ENCODE measurements at regions of chr5 and their contacts with region 1.

Region 1: GRCh38 chr5:159106569-159107282 is 7.0 kb upstream of the EBF1 start:
- DNase-seq: peak; percentile 88
- ATAC-seq: peak; percentile 75
- H3K4me3 ChIP-seq: peak overlapping the region; percentile 44 to 70 (median 66)
- H3K4me3 Mint-ChIP-seq: peak overlapping the region; percentile 100
- H3K27ac ChIP-seq: no peak overlapping the region
- H3K27ac Mint-ChIP-seq: peak overlapping the region; percentile 87
- H3K4me1 ChIP-seq: peaks cover 42 to 48% of the 10 kb centered on the region in 2 donors
- H3K4me1 Mint-ChIP-seq: peaks cover 52% of the 10 kb centered on the region
- H3K27me3 ChIP-seq: no peaks in the 10 kb centered on the region
- H3K27me3 Mint-ChIP-seq: no peaks in the 10 kb centered on the region
- CTCF ChIP-seq: peak; percentile 98

Region 2: GRCh38 chr5:157820593-157821252 is 1286.0 kb before region 1 on chr5:
- CTCF ChIA-PET with region 1: interaction called, 24 read pairs
- POLR2A ChIA-PET with region 1: no interaction called
- intact Hi-C with region 1: loop called (anchors 1 kb)
- DNase-seq: peak; percentile 53
- ATAC-seq: no peak
- H3K4me3 ChIP-seq: no peak overlapping the region
- H3K4me3 Mint-ChIP-seq: no peak overlapping the region
- H3K27ac ChIP-seq: peak overlapping the region in 1 of 2 donors; percentile 39
- H3K27ac Mint-ChIP-seq: peak overlapping the region; percentile 2
- H3K4me1 ChIP-seq: no peaks in the 10 kb centered on the region
- H3K4me1 Mint-ChIP-seq: peaks cover 24% of the 10 kb centered on the region
- H3K27me3 ChIP-seq: no peaks in the 10 kb centered on the region
- H3K27me3 Mint-ChIP-seq: no peaks in the 10 kb centered on the region
- CTCF ChIP-seq: peak; percentile 72

Region 3: DNA sequence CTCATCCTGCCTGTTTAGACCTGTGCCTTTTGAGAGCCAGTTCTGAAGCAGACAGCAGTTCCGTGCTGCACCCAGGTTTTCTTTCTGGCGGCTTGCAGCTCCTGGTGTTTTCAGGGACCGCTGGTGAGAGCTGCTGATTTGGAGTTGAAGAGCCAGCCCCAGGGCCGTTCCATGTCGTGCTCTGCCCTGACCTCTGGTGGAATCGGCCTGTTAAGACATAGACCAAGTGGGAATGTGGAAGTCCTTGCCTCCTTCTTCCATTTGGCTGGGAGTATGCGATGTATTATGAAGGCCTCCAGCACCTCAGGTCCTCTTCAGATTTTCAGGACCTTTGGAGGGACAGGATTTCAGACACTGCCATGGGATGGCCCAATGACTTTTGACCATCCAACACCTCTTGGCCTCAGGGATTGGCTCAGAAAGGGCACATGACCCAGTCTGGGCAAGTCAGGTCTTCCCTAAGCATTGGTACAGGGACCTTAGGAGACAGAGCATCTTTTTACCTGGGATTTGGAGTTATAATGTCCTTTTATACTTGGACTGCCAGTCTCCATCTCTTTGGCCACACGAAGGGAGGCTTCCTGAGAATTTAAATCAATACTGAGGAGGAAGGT is 1111.7 kb before region 1 on chr5:
- CTCF ChIA-PET with region 1: interaction called, 8 read pairs
- POLR2A ChIA-PET with region 1: no interaction called
- intact Hi-C with region 1: loop called (anchors 5 kb)
- DNase-seq: peak; percentile 57
- ATAC-seq: peak; percentile 69
- H3K4me3 ChIP-seq: no peak overlapping the region
- H3K4me3 Mint-ChIP-seq: no peak overlapping the region
- H3K27ac ChIP-seq: no peak overlapping the region
- H3K27ac Mint-ChIP-seq: no peak overlapping the region
- H3K4me1 ChIP-seq: peaks cover 0 to 3% of the 10 kb centered on the region in 2 donors
- H3K4me1 Mint-ChIP-seq: peaks cover 2% of the 10 kb centered on the region
- H3K27me3 ChIP-seq: peaks cover 0 to 4% (median 0%) of the 10 kb centered on the region in 4 experiments
- H3K27me3 Mint-ChIP-seq: peaks cover 5% of the 10 kb centered on the region
- CTCF ChIP-seq: peak; percentile 72

Region 4: DNA sequence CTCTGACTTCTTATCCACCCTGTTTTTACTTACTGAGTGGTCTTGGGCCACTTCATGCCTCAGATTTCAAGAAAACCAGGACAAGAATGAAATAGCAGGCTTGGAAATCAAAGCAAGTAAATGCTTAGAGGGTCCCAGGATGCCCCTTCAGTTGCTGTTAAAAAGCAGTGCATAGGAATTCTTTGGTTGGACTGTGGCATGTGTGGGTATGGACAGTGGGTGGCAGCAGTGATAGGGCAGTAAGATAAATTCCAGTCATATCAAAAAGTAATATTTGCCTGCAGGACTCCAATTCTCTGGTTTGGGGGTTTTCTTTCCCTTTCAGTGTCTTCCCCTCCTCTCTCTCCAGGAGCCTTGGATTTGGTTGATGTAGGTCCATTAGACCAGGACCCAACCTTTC is 941.1 kb before region 1 on chr5:
- CTCF ChIA-PET with region 1: interaction called, 238 read pairs
- POLR2A ChIA-PET with region 1: no interaction called
- intact Hi-C with region 1: no loop called
- DNase-seq: no peak
- ATAC-seq: no peak
- H3K4me3 ChIP-seq: no peak overlapping the region
- H3K4me3 Mint-ChIP-seq: no peak overlapping the region
- H3K27ac ChIP-seq: no peak overlapping the region
- H3K27ac Mint-ChIP-seq: no peak overlapping the region
- H3K4me1 ChIP-seq: peaks cover 9 to 10% of the 10 kb centered on the region in 2 donors
- H3K4me1 Mint-ChIP-seq: peaks cover 9% of the 10 kb centered on the region
- H3K27me3 ChIP-seq: peaks cover 0 to 3% (median 0%) of the 10 kb centered on the region in 4 experiments
- H3K27me3 Mint-ChIP-seq: peaks cover 14% of the 10 kb centered on the region
- CTCF ChIP-seq: no peak

Region 5: GRCh38 chr5:158751961-158752655 is 354.6 kb before region 1 on chr5:
- CTCF ChIA-PET with region 1: interaction called, 4 read pairs
- POLR2A ChIA-PET with region 1: no interaction called
- intact Hi-C with region 1: loop called (anchors 2 kb)
- DNase-seq: peak; percentile 79
- ATAC-seq: peak; percentile 80
- H3K4me3 ChIP-seq: peak overlapping the region; percentile 23 to 62 (median 34)
- H3K4me3 Mint-ChIP-seq: peak overlapping the region; percentile 87
- H3K27ac ChIP-seq: peak overlapping the region; percentile 78 to 81
- H3K27ac Mint-ChIP-seq: peak overlapping the region; percentile 67
- H3K4me1 ChIP-seq: peaks cover 60 to 70% of the 10 kb centered on the region in 2 donors
- H3K4me1 Mint-ChIP-seq: peaks cover 91% of the 10 kb centered on the region
- H3K27me3 ChIP-seq: no peaks in the 10 kb centered on the region
- H3K27me3 Mint-ChIP-seq: no peaks in the 10 kb centered on the region
- CTCF ChIP-seq: no peak

Region 6: GRCh38 chr5:158880483-158881001 is 226.2 kb before region 1 on chr5:
- CTCF ChIA-PET with region 1: interaction called, 15 read pairs
- POLR2A ChIA-PET with region 1: no interaction called
- intact Hi-C with region 1: loop called (anchors 2 kb)
- DNase-seq: peak; percentile 54
- ATAC-seq: peak; percentile 25
- H3K4me3 ChIP-seq: peak overlapping the region in 2 of 5 experiments; percentile 13 to 29
- H3K4me3 Mint-ChIP-seq: peak overlapping the region; percentile 73
- H3K27ac ChIP-seq: peak overlapping the region; percentile 71 to 85
- H3K27ac Mint-ChIP-seq: peak overlapping the region; percentile 89
- H3K4me1 ChIP-seq: peaks cover 89 to 97% of the 10 kb centered on the region in 2 donors
- H3K4me1 Mint-ChIP-seq: peaks cover 92% of the 10 kb centered on the region
- H3K27me3 ChIP-seq: no peaks in the 10 kb centered on the region
- H3K27me3 Mint-ChIP-seq: no peaks in the 10 kb centered on the region
- CTCF ChIP-seq: no peak

Region 7: DNA sequence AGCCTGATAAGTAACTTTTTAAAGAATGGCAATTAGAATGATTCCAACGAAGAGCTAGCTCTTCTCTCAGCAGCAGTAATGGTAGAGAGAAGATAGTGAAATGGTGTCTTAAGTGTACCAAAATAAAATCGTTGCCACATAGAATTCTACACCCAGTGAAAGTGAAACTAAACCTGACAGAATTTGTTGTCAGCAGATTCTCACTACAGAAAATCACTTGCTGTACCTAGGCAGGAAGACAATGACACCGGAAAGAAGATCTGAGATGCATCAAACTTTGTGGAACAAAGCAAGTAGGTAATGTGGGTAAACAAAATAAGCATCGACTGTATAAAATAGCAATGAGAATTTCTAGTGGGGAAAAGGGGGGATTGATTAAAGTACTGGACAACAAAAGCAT is 13.7 kb after region 1 on chr5:
- CTCF ChIA-PET with region 1: interaction called, 11 read pairs
- POLR2A ChIA-PET with region 1: no interaction called
- intact Hi-C with region 1: no loop called
- DNase-seq: peak; percentile 19
- ATAC-seq: peak; percentile 39
- H3K4me3 ChIP-seq: peak overlapping the region in 1 of 5 experiments; percentile 3
- H3K4me3 Mint-ChIP-seq: peak overlapping the region; percentile 57
- H3K27ac ChIP-seq: peak overlapping the region in 1 of 2 donors; percentile 8
- H3K27ac Mint-ChIP-seq: peak overlapping the region; percentile 60
- H3K4me1 ChIP-seq: peaks cover 0 to 10% of the 10 kb centered on the region in 2 donors
- H3K4me1 Mint-ChIP-seq: peaks cover 12% of the 10 kb centered on the region
- H3K27me3 ChIP-seq: no peaks in the 10 kb centered on the region
- H3K27me3 Mint-ChIP-seq: no peaks in the 10 kb centered on the region
- CTCF ChIP-seq: no peak

Region 8: GRCh38 chr5:159218595-159219023 is 111.9 kb after region 1 on chr5:
- CTCF ChIA-PET with region 1: no interaction called
- POLR2A ChIA-PET with region 1: no interaction called
- intact Hi-C with region 1: no loop called
- DNase-seq: no peak
- ATAC-seq: no peak
- H3K4me3 ChIP-seq: no peak overlapping the region
- H3K4me3 Mint-ChIP-seq: no peak overlapping the region
- H3K27ac ChIP-seq: no peak overlapping the region
- H3K27ac Mint-ChIP-seq: no peak overlapping the region
- H3K4me1 ChIP-seq: no peaks in the 10 kb centered on the region
- H3K4me1 Mint-ChIP-seq: no peaks in the 10 kb centered on the region
- H3K27me3 ChIP-seq: no peaks in the 10 kb centered on the region
- H3K27me3 Mint-ChIP-seq: no peaks in the 10 kb centered on the region
- CTCF ChIP-seq: no peak

Region 9: DNA sequence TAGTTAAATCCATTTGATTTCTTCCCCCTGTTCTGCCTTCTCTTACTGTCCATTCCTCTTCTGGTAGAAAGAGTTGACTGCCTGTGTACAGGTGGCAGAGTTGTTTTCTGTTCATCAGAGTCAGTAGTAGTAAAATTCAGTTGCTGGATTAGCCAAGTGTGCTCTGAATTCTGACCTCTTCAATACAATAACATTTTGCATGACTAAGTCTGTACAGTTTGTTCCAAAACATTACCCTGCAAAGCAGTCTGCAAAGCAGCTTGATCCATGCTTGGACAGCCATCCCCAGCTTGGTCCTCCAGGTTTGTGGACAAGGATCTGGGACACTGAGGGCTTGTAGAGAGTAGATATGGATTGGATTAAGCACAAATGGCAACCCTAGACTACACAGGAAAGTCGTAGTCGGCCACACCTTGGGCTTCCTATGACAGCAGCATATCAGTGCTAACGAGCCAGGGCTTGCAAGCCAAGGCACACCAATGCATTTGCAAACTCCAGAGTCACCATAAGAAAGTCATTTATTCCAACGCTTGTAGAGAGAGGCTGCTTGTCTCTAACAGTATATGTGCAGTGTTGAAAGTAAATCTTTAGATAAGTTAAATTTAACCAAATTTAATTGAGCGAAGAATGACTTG is 198.4 kb after region 1 on chr5:
- CTCF ChIA-PET with region 1: no interaction called
- POLR2A ChIA-PET with region 1: no interaction called
- intact Hi-C with region 1: no loop called
- DNase-seq: no peak
- ATAC-seq: no peak
- H3K4me3 ChIP-seq: no peak overlapping the region
- H3K4me3 Mint-ChIP-seq: no peak overlapping the region
- H3K27ac ChIP-seq: no peak overlapping the region
- H3K27ac Mint-ChIP-seq: peak overlapping the region; percentile 47
- H3K4me1 ChIP-seq: peaks cover under 1 to 2% of the 10 kb centered on the region in 2 donors
- H3K4me1 Mint-ChIP-seq: peaks cover 22% of the 10 kb centered on the region
- H3K27me3 ChIP-seq: no peaks in the 10 kb centered on the region
- H3K27me3 Mint-ChIP-seq: no peaks in the 10 kb centered on the region
- CTCF ChIP-seq: no peak

Measured in B cell (primary cell).